GM10248 (cell line): ENCODE measurements at regions of chr2 and their contacts with region 1.

Region 1: DNA sequence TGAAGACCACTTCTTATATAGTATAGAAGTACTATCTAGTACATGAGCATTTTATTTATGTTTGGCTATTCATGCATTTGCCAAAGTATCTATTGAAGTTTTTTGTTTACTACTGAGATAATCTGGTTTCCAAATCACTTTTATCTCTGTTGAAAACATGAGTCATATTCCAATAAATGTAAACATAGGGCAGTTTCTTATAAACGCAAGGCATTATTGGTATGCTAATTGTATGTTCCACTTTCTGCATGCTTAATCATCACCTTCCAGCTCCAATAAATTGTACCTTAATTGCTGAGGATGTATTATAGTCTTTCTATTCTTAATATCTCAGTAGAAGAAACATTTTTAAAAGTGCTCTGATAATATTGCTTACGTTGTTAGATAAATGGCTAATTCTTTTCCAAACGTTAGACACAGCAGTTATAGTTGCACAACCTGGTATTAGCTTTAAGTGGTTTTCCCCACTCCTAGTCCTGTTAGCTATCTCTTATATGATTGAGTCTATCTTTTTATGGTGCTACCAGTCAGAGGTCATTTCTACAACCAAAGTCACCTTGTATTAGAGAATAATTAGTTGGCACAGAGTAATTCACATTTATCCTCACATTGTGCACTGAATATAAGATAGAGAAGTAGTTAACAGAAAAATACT is 17.2 kb downstream of the ITGA4 start:
- DNase-seq: no peak
- CTCF ChIP-seq: no peak

Region 2: GRCh38 chr2:181485638-181485946 is 11.2 kb after region 1 on chr2:
- CTCF ChIA-PET with region 1: interaction called, 10 read pairs
- POLR2A ChIA-PET with region 1: no interaction called
- DNase-seq: no peak
- CTCF ChIP-seq: no peak